Activated T-helper 1 cell treated with anti-CD3 and anti-CD28 coated beads, Interleukin-12 subunit alpha, Interleukin-12 subunit beta, Interleukin-2, Interleukin-4 antibody, amounts not matched to agents 30 ng/mL and 10 ng/mL and 1 ng/mL, durations not matched to agents 14 hours and 24 hours and 36 hours (primary cell): ENCODE measurements at regions of chr1 and their contacts with region 1.

Region 1: DNA sequence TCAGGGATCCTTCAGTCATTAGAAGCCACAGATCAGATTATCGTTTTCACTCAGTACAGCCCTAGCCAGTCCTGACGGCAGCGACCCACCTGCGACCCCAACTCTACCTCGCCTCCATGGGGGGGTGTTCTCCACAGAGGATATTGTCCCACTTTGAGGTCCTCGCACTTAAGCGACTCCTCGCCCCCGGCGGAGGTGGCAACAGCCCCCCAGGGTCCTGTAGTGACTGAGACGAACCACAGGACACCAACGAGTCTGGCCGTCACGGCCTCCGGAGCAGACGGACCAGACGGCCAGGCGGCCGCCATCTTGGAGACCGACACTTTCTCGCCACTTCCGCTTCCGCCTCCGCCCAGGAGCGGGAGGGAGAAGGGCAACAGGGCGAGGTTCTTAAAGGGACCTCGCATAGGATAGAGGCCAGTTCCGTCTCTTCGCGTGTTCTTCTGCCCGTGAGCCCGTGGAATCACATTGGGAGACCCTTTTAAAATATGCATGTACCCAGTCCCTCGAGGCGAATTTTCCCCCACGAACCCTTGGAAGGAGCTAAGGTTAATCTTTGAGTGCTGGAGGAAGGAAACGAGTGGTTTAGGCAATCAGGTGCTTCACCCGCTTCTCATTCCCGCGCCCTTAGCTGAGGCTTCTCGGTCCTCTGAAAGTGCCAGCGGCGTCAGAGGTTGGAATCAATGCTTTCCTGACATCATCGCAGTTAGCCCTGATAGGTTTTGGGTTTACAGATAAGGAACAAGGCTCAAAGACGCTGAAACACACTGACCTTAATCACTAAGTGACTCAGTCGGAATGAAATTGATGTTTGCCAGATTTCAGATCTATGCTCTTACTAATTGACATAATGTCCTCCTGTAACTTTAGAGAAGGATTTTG is at the start of gene TM2D1:
- DNase-seq: peak; percentile 86
- H3K4me3 Mint-ChIP-seq: peak within 1 kb of the TSS; percentile 99
- H3K27ac Mint-ChIP-seq: peak within 1 kb of the TSS; percentile 99
- H3K4me1 Mint-ChIP-seq: peaks cover 18% of the 10 kb centered on the region
- H3K27me3 Mint-ChIP-seq: peaks cover 2% of the 10 kb centered on the region
- total RNA-seq, gene TM2D1: 28.3 and 29.6 TPM in 2 replicates

Region 2: GRCh38 chr1:61056573-61057439 is 668.2 kb before region 1 on chr1:
- intact Hi-C with region 1: loop called (anchors 1 kb)
- DNase-seq: no peak
- H3K4me3 Mint-ChIP-seq: peak overlapping the region; percentile 74
- H3K27ac Mint-ChIP-seq: no peak overlapping the region
- H3K4me1 Mint-ChIP-seq: peaks cover 29% of the 10 kb centered on the region
- H3K27me3 Mint-ChIP-seq: peaks cover 80% of the 10 kb centered on the region

Region 3: DNA sequence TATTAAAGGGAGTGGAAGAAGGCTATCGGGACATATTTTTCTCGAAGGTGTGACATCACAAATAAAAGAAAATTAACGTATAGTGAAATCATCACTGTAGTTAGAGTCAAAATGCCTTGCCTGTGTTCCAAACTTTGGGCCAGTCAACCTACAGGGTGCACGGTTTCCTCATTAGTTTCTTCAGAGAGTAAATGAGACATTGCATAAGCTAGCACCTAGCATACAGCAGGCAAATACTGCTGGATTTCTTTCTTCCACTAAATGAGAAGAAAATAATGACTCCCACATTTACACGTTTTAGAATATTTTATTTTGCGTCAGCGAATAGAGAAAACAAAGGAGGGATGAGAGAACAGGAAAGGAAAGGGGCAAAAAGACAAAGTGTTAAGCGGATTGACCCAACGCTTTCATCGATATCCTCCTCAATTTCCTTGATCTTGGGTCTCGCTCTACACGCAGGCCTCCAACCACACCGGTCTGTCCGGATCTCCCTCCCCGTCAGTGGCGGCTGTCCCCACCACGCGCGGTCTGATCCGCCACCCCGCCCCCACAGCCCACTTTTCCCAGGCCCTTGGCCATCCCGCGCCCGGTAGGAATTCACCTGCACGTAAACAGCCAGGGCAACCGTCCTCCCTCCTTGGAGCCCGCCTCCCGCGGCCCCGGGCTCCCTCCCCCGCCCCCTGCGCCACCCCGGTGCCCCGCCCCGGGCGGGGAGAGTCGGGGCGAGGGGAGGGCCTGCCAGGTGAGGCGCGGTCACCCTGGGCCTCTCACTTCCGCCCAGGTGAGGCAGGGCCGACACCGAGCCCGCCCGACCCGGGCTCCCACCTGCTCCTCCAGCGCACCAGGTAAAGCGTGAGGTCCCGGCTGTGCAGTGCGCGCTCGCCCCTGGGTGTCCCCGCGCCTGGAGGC is 16.9 kb after region 1 on chr1 and contains the start of gene PATJ:
- intact Hi-C with region 1: loop called (anchors 1 kb)
- DNase-seq: peak; percentile 59
- H3K4me3 Mint-ChIP-seq: peak within 1 kb of the TSS; percentile 92
- H3K27ac Mint-ChIP-seq: peak within 1 kb of the TSS; percentile 88
- H3K4me1 Mint-ChIP-seq: peaks cover 22% of the 10 kb centered on the region
- H3K27me3 Mint-ChIP-seq: no peaks in the 10 kb centered on the region
- total RNA-seq, gene PATJ: 5.1 and 7.3 TPM in 2 replicates

Region 4: GRCh38 chr1:61770131-61770530 is 45.1 kb after region 1 on chr1:
- intact Hi-C with region 1: no loop called
- DNase-seq: no peak
- H3K4me3 Mint-ChIP-seq: no peak overlapping the region
- H3K27ac Mint-ChIP-seq: no peak overlapping the region
- H3K4me1 Mint-ChIP-seq: no peaks in the 10 kb centered on the region
- H3K27me3 Mint-ChIP-seq: no peaks in the 10 kb centered on the region

Region 5: GRCh38 chr1:61851849-61852669 is 127.0 kb after region 1 on chr1:
- intact Hi-C with region 1: loop called (anchors 2 kb)
- DNase-seq: no peak
- H3K4me3 Mint-ChIP-seq: no peak overlapping the region
- H3K27ac Mint-ChIP-seq: no peak overlapping the region
- H3K4me1 Mint-ChIP-seq: no peaks in the 10 kb centered on the region
- H3K27me3 Mint-ChIP-seq: no peaks in the 10 kb centered on the region

Region 6: DNA sequence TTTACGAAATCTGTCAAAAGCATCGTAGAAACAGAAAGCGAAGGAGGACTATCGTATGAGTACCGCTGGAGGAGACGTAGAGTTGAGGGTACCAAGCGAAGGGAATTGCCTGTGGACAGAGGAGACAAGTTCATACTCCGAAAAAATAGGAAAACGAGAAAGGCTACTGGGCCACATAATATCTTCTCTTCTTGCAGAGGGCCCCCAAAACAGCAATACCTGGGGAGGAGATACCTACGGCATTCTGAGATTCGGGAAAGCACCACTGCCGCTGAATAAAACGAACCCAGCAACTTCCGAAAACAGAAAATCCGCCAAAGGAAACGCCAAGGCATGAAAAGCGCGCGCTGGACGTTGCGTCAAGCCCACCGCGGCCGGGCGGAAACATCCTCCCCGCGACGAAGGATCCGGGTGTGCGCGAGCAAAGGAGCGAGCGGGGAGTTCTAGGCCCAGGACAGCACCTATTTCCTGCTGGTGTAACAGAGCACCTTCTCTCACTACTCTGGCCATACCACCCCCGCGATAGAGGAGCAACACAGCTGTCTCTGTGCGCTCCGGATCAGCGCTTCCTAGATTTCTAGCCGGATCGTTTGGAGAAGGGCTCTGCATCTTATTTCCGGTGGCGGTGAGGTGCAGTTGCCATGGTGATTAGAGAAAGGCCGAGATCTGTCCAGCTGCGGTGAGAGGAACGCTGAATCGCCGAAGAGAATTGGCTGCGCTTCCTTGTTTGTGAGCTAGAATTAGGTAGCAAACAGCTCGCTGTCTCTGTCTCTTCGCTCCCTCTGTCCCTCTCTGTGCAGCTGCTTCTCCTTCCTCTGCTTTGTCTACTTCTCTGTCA is 1798.1 kb after region 1 on chr1 and contains the starts of genes EFCAB7 and ITGB3BP:
- intact Hi-C with region 1: loop called (anchors 10 kb)
- DNase-seq: peak; percentile 80
- H3K4me3 Mint-ChIP-seq: peak within 1 kb of the TSS; percentile 99
- H3K27ac Mint-ChIP-seq: peak within 1 kb of the TSS; percentile 94
- H3K4me1 Mint-ChIP-seq: peaks cover 53% of the 10 kb centered on the region
- H3K27me3 Mint-ChIP-seq: no peaks in the 10 kb centered on the region
- total RNA-seq, gene EFCAB7: 6.4 and 6.7 TPM in 2 replicates
- total RNA-seq, gene ITGB3BP: 44.1 and 49.8 TPM in 2 replicates